Activated naive CD4-positive, alpha-beta T cell treated with anti-CD3 and anti-CD28 coated beads for 36 hours (primary cell): ENCODE measurements at regions of chr9 and their contacts with region 1.

Region 1: DNA sequence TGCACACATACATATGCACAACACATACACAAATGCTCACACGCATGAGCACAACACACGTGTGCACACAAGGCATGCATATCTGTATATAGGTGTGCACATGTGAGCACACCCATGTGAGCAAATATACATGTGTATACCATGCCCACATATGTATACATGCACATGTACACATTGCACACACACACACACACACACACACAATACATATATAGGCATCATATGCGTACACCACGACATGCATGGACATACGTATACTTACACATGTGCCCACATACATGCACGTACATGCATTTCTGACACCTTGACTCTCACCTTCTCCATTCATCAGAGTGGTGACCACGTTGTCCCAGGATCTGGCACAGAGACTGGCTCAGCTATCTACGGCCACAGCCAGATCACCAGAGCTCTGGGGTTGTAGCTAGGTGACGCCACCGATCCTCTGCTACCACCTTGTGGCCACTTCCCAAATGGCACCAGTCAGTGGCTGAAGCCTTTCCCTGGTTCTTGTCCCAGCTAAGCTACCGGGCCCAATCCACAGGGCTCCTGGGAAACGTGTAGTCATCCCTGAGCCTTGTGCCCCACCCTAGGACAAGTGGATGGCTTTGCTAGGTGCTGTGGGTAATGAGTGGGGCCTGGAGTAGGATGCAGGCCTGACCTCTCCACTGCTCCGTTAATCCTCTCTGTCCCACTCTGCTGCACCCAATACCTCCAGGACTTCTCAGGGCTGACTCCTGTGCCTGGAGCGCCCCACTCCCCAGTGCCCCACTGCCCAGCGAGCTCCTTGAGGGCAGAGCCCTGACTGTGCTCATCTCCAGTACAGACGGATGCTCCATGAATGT is 194.4 kb downstream of the RGS3 start:
- DNase-seq: peak; percentile 88
- H3K4me3 Mint-ChIP-seq: no peak overlapping the region
- H3K27ac Mint-ChIP-seq: no peak overlapping the region
- H3K4me1 Mint-ChIP-seq: no peaks in the 10 kb centered on the region
- H3K27me3 Mint-ChIP-seq: peaks cover 6% of the 10 kb centered on the region

Region 2: DNA sequence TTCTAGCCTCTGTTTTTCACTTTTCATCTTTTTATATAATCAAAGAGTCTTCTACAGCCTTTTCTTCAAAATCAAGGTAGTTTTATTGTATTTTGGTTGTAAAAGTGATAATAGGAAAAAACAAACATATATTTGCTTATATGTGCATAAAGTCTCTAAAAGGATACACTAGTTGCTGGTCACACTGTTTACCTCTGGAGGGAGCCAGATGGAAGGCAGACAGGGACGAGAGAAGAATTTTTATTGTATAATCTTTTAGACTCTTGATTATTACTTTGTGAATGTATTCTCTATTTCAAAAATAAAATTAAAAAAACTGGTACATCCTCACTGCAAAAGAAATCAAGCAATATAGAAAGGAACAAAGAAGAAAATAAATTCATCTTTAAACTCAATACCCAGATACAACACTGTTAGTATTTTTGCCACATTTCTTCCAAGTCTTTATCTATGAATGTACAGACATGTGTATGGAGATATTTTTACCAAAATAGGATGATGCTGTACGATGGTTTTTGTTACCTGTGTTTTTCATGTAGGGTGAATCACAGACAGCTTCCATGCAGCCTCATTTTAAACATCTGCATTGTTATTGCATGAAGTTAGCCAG is 348.6 kb before region 1 on chr9:
- CTCF ChIA-PET with region 1: interaction called, 10 read pairs
- intact Hi-C with region 1: loop called (anchors 1 kb)
- DNase-seq: peak; percentile 53
- H3K4me3 Mint-ChIP-seq: no peak overlapping the region
- H3K27ac Mint-ChIP-seq: no peak overlapping the region
- H3K4me1 Mint-ChIP-seq: no peaks in the 10 kb centered on the region
- H3K27me3 Mint-ChIP-seq: no peaks in the 10 kb centered on the region

Region 3: GRCh38 chr9:113410207-113410864 is 247.6 kb before region 1 on chr9 and contains the starts of genes C9orf43 and POLE3:
- CTCF ChIA-PET with region 1: interaction called, 12 read pairs
- intact Hi-C with region 1: no loop called
- DNase-seq: peak; percentile 97
- H3K4me3 Mint-ChIP-seq: peak within 1 kb of the TSS; percentile 99
- H3K27ac Mint-ChIP-seq: peak within 1 kb of the TSS; percentile 100
- H3K4me1 Mint-ChIP-seq: peaks cover 38% of the 10 kb centered on the region
- H3K27me3 Mint-ChIP-seq: no peaks in the 10 kb centered on the region
- total RNA-seq, gene C9orf43: 0.83 to 0.84 TPM
- total RNA-seq, gene POLE3: 34.1 to 37.4 TPM

Region 4: GRCh38 chr9:113454914-113455761 is 202.8 kb before region 1 on chr9:
- CTCF ChIA-PET with region 1: interaction called, 20 read pairs
- intact Hi-C with region 1: no loop called
- DNase-seq: peak; percentile 31
- H3K4me3 Mint-ChIP-seq: no peak overlapping the region
- H3K27ac Mint-ChIP-seq: no peak overlapping the region
- H3K4me1 Mint-ChIP-seq: peaks cover 4% of the 10 kb centered on the region
- H3K27me3 Mint-ChIP-seq: no peaks in the 10 kb centered on the region

Region 5: DNA sequence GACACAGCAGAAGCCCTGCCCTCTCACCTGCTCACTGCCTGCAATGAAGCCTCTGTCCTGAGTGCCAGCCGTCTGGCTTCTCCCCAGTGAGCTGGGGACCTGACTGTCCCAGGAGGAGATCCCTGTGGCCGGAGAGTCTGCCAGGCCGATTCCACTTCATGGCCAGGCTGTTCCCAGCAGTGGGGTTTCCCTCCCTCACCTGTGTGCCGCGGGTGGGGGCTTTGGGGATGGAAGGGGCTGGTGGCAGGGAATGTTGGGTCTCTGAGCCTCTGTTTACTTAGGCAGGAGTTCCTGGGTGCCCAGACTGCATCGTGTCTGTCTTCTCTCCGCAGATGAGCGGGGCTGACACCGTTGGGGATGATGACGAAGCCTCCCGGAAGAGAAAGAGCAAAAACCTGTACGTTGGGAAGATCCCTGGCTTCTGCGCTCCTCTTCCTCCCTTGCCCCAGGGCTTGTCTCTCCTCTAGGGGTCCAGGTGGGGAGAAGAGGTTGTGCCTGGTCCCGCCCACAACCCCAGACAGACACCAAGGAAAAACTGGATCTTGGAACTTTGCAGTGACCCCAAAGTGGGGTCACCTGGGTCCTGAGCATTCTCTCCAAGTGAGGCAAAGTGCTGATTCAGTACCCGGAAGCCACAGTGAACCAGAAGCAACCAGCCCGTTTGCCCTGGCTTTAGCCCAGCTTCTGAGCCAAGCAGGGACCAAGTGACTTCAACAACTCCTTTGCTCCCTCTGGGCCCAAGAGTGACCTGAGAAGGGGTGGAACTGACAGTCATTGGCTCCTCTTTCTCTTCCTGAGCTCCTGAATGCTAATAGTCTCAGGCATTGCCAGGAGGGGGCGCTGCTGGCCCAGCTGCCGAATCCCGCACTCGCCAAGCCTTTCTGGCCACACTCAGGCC is 66.7 kb before region 1 on chr9:
- CTCF ChIA-PET with region 1: interaction called, 440 read pairs
- intact Hi-C with region 1: loop called (anchors 1 kb)
- DNase-seq: peak; percentile 85
- H3K4me3 Mint-ChIP-seq: no peak overlapping the region
- H3K27ac Mint-ChIP-seq: no peak overlapping the region
- H3K4me1 Mint-ChIP-seq: peaks cover 37% of the 10 kb centered on the region
- H3K27me3 Mint-ChIP-seq: no peaks in the 10 kb centered on the region

Region 6: DNA sequence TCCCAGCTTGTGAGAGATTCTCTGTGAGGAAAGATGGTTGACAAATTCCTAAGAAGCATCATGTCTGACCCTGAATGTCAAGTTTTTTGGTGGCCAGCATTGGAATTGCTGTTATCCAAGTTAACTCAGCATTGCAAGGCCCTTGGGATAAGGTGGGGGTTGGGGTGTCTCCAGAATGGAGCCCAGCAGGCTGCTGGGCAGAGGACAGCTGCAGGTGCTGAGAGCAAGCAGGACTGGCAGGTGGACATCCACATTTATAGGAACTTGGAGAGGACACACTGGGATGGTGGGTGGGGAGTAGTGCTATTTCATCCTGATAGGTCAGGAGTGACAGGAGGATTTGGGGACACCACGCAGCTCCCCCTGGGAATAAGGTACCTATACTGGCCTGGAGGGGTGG is 46.5 kb before region 1 on chr9:
- CTCF ChIA-PET with region 1: interaction called, 15 read pairs
- intact Hi-C with region 1: no loop called
- DNase-seq: no peak
- H3K4me3 Mint-ChIP-seq: no peak overlapping the region
- H3K27ac Mint-ChIP-seq: no peak overlapping the region
- H3K4me1 Mint-ChIP-seq: peaks cover 16% of the 10 kb centered on the region
- H3K27me3 Mint-ChIP-seq: no peaks in the 10 kb centered on the region

Region 7: GRCh38 chr9:113669522-113670115 is 11.7 kb after region 1 on chr9:
- CTCF ChIA-PET with region 1: interaction called, 15 read pairs
- intact Hi-C with region 1: no loop called
- DNase-seq: no peak
- H3K4me3 Mint-ChIP-seq: no peak overlapping the region
- H3K27ac Mint-ChIP-seq: no peak overlapping the region
- H3K4me1 Mint-ChIP-seq: no peaks in the 10 kb centered on the region
- H3K27me3 Mint-ChIP-seq: peaks cover 3% of the 10 kb centered on the region

Region 8: DNA sequence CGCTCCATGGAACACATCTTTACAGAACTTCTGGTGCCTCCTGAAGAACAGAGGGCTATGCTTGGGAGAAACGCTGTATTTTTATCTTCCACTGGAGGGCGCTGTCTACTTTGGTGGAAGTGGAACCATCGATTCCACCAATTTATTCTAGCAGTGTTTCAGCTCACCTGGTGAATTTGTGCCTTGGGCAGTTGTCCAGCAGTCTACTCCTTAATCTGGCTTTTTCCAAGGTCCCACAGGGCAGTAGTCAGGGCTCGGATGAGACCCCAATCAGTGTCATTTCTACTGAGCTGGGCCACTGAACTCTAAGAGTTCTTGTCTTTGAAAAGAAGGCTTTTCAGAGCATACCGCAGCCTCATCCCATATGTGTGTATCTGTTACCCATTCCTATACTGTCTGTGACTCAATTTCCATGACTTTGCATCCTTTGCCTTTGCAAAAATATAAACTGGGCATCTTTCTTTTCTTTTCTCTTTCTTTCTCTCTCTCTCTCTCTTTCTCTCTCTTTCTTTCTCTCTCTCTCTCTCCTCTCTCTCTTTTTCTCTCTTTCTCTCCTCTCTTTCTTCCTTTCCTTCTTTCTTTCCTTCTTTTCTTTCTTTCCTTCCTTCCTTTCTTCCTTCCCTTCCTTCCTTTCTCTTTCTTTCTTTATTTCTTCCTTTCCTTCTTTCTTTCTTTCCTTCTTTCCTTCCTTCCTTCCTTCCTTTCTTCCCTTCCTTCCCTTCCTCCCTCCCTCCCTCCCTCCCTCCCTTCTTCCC is 79.8 kb after region 1 on chr9:
- CTCF ChIA-PET with region 1: no interaction called
- intact Hi-C with region 1: no loop called
- DNase-seq: peak; percentile 55
- H3K4me3 Mint-ChIP-seq: no peak overlapping the region
- H3K27ac Mint-ChIP-seq: no peak overlapping the region
- H3K4me1 Mint-ChIP-seq: no peaks in the 10 kb centered on the region
- H3K27me3 Mint-ChIP-seq: peaks cover 16% of the 10 kb centered on the region

Region 9: GRCh38 chr9:113868501-113868900 is 210.6 kb after region 1 on chr9:
- CTCF ChIA-PET with region 1: no interaction called
- intact Hi-C with region 1: no loop called
- DNase-seq: no peak
- H3K4me3 Mint-ChIP-seq: no peak overlapping the region
- H3K27ac Mint-ChIP-seq: no peak overlapping the region
- H3K4me1 Mint-ChIP-seq: no peaks in the 10 kb centered on the region
- H3K27me3 Mint-ChIP-seq: peaks cover 5% of the 10 kb centered on the region